ENCODE measurements at regions of chr12 and their contacts with region 1.

Region 1: GRCh38 chr12:54265364-54265812 is 14.5 kb downstream of the CBX5 start:
- DNase-seq: no peak
- H3K4me3 Mint-ChIP-seq: no peak overlapping the region
- H3K27ac Mint-ChIP-seq: no peak overlapping the region
- H3K4me1 Mint-ChIP-seq: peaks cover 23% of the 10 kb centered on the region
- H3K27me3 Mint-ChIP-seq: no peaks in the 10 kb centered on the region

Region 2: DNA sequence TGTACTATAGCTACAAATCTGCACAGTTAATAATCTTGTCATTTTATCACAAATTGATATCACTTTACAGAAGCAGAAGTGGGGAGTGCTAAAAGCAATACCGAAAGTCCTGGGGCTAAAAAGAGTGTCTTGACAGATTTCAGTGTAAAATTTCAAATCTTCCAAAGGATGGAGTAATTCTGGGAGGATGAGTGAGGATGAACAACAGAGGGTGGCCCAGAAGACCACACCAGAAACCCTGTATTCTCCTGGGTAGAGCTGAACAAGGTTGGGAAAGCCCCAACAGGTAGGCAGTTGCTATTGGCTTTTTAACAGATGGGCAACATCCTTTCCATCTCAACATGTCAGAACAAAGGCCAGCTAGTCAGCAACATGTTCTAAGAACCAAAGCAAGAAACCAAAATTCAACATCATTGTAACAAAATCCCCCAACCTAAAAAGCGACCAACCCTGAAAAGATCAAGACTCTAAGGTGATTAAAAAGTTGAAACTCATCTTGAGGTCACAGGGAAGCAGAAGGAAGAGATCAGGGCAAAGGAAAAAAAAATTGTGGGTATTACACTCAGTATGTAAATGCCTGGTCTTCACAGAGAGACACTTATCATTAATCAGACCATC is 24.3 kb before region 1 on chr12:
- CTCF ChIA-PET with region 1: no interaction called
- POLR2A ChIA-PET with region 1: no interaction called
- DNase-seq: no peak
- H3K4me3 Mint-ChIP-seq: no peak overlapping the region
- H3K27ac Mint-ChIP-seq: peak overlapping the region; percentile 47
- H3K4me1 Mint-ChIP-seq: peaks cover 15% of the 10 kb centered on the region
- H3K27me3 Mint-ChIP-seq: no peaks in the 10 kb centered on the region

Region 3: GRCh38 chr12:54253240-54253639 is 12.1 kb before region 1 on chr12:
- CTCF ChIA-PET with region 1: interaction called, 12 read pairs
- POLR2A ChIA-PET with region 1: no interaction called
- DNase-seq: no peak
- H3K4me3 Mint-ChIP-seq: no peak overlapping the region
- H3K27ac Mint-ChIP-seq: no peak overlapping the region
- H3K4me1 Mint-ChIP-seq: peaks cover 12% of the 10 kb centered on the region
- H3K27me3 Mint-ChIP-seq: no peaks in the 10 kb centered on the region